Mammary epithelial cell (primary cell): ENCODE measurements at regions of chr16 and their contacts with region 1.

Region 1: DNA sequence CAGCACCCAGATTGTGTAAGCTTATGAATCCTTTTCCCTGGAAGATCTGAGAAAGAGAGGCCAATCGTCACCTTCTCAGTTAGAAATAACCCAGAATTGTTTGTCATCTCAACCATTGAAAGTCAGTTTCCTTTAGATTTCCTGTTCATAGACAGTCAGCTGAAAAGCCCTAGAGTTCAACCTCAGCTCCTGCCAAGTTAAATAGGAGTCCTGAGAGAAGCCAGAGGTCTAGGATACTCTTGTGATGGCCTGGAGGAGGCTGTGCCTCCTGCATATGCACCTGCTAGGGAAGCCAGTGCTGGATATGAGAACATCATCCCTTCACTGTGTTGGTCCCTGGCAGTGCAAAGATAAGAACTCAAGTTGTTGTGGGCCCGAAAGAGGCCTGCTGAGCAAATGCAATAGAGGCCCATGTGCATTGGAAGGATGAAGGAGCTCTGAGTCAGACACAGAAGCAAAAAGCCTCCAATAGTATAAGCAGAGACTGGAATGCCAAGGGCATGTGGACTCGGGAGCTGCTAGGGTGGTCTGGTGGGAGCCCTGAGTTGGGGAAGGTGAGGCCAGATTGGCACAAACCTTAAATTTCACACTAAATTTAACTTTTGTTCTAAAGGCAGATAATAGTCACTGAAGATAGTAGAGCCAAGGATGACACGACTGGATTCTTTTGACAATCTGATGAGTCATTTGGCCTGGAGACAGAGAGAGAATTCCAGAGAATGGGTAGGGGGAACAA is 520.9 kb upstream of the CDH5 start:
- DNase-seq: peak; percentile 1
- H3K4me3 ChIP-seq: no peak overlapping the region
- H3K27ac ChIP-seq: no peak overlapping the region
- H3K4me1 ChIP-seq: peaks cover 9% of the 10 kb centered on the region
- H3K27me3 ChIP-seq: no peaks in the 10 kb centered on the region
- CTCF ChIP-seq: no peak

Region 2: GRCh38 chr16:65728167-65728566 is 117.5 kb before region 1 on chr16:
- CTCF ChIA-PET with region 1: interaction called, 14 read pairs
- dilution Hi-C with region 1: no loop called
- in situ Hi-C with region 1: no loop called
- intact Hi-C with region 1: no loop called
- DNase-seq: peak; percentile 5
- H3K4me3 ChIP-seq: no peak overlapping the region
- H3K27ac ChIP-seq: no peak overlapping the region
- H3K4me1 ChIP-seq: peaks cover 14% of the 10 kb centered on the region
- H3K27me3 ChIP-seq: peaks cover 2% of the 10 kb centered on the region
- CTCF ChIP-seq: no peak

Region 3: GRCh38 chr16:65739518-65739917 is 106.1 kb before region 1 on chr16:
- CTCF ChIA-PET with region 1: no interaction called
- dilution Hi-C with region 1: no loop called
- in situ Hi-C with region 1: no loop called
- intact Hi-C with region 1: no loop called
- DNase-seq: no peak
- H3K4me3 ChIP-seq: no peak overlapping the region
- H3K27ac ChIP-seq: no peak overlapping the region
- H3K4me1 ChIP-seq: peaks cover 9% of the 10 kb centered on the region
- H3K27me3 ChIP-seq: no peaks in the 10 kb centered on the region
- CTCF ChIP-seq: no peak

Region 4: GRCh38 chr16:65809627-65810026 is 36.0 kb before region 1 on chr16:
- CTCF ChIA-PET with region 1: no interaction called
- dilution Hi-C with region 1: no loop called
- in situ Hi-C with region 1: no loop called
- intact Hi-C with region 1: no loop called
- DNase-seq: no peak
- H3K4me3 ChIP-seq: no peak overlapping the region
- H3K27ac ChIP-seq: no peak overlapping the region
- H3K4me1 ChIP-seq: no peaks in the 10 kb centered on the region
- H3K27me3 ChIP-seq: no peaks in the 10 kb centered on the region
- CTCF ChIP-seq: no peak

Region 5: GRCh38 chr16:65884018-65884417 is 38.4 kb after region 1 on chr16:
- CTCF ChIA-PET with region 1: no interaction called
- dilution Hi-C with region 1: loop called (anchors 5 kb)
- in situ Hi-C with region 1: no loop called
- intact Hi-C with region 1: no loop called
- DNase-seq: peak; percentile 90
- H3K4me3 ChIP-seq: no peak overlapping the region
- H3K27ac ChIP-seq: peak overlapping the region; percentile 98
- H3K4me1 ChIP-seq: peaks cover 29% of the 10 kb centered on the region
- H3K27me3 ChIP-seq: no peaks in the 10 kb centered on the region
- CTCF ChIP-seq: no peak

Region 6: GRCh38 chr16:65936096-65936495 is 90.5 kb after region 1 on chr16:
- CTCF ChIA-PET with region 1: no interaction called
- dilution Hi-C with region 1: no loop called
- in situ Hi-C with region 1: no loop called
- intact Hi-C with region 1: no loop called
- DNase-seq: no peak
- H3K4me3 ChIP-seq: no peak overlapping the region
- H3K27ac ChIP-seq: no peak overlapping the region
- H3K4me1 ChIP-seq: no peaks in the 10 kb centered on the region
- H3K27me3 ChIP-seq: no peaks in the 10 kb centered on the region
- CTCF ChIP-seq: no peak